ENCODE measurements at regions of chr1 and their contacts with region 1.

Region 1: GRCh38 chr1:180080433-180080832 is 74.2 kb upstream of the QSOX1 start:
- DNase-seq: no peak
- ATAC-seq: no peak
- H3K4me3 ChIP-seq: no peak overlapping the region
- H3K4me3 Mint-ChIP-seq: no peak overlapping the region
- H3K27ac ChIP-seq: no peak overlapping the region
- H3K27ac Mint-ChIP-seq: no peak overlapping the region
- H3K4me1 ChIP-seq: no peaks in the 10 kb centered on the region
- H3K4me1 Mint-ChIP-seq: no peaks in the 10 kb centered on the region
- H3K27me3 ChIP-seq: no peaks in the 10 kb centered on the region
- H3K27me3 Mint-ChIP-seq: no peaks in the 10 kb centered on the region

Region 2: GRCh38 chr1:180065811-180066549 is 14.5 kb before region 1 on chr1:
- CTCF ChIA-PET with region 1: no interaction called
- POLR2A ChIA-PET with region 1: no interaction called
- intact Hi-C with region 1: no loop called
- DNase-seq: no peak
- ATAC-seq: no peak
- H3K4me3 ChIP-seq: no peak overlapping the region
- H3K4me3 Mint-ChIP-seq: no peak overlapping the region
- H3K27ac ChIP-seq: no peak overlapping the region
- H3K27ac Mint-ChIP-seq: no peak overlapping the region
- H3K4me1 ChIP-seq: no peaks in the 10 kb centered on the region
- H3K4me1 Mint-ChIP-seq: no peaks in the 10 kb centered on the region
- H3K27me3 ChIP-seq: no peaks in the 10 kb centered on the region
- H3K27me3 Mint-ChIP-seq: no peaks in the 10 kb centered on the region

Region 3: GRCh38 chr1:180112984-180113647 is 32.7 kb after region 1 on chr1:
- CTCF ChIA-PET with region 1: no interaction called
- POLR2A ChIA-PET with region 1: no interaction called
- intact Hi-C with region 1: no loop called
- DNase-seq: no peak
- ATAC-seq: no peak
- H3K4me3 ChIP-seq: no peak overlapping the region
- H3K4me3 Mint-ChIP-seq: no peak overlapping the region
- H3K27ac ChIP-seq: no peak overlapping the region
- H3K27ac Mint-ChIP-seq: peak overlapping the region in 1 of 9 donors; percentile 12
- H3K4me1 ChIP-seq: no peaks in the 10 kb centered on the region
- H3K4me1 Mint-ChIP-seq: peaks cover 0 to 4% (median 0%) of the 10 kb centered on the region in 7 donors
- H3K27me3 ChIP-seq: no peaks in the 10 kb centered on the region
- H3K27me3 Mint-ChIP-seq: no peaks in the 10 kb centered on the region

Region 4: DNA sequence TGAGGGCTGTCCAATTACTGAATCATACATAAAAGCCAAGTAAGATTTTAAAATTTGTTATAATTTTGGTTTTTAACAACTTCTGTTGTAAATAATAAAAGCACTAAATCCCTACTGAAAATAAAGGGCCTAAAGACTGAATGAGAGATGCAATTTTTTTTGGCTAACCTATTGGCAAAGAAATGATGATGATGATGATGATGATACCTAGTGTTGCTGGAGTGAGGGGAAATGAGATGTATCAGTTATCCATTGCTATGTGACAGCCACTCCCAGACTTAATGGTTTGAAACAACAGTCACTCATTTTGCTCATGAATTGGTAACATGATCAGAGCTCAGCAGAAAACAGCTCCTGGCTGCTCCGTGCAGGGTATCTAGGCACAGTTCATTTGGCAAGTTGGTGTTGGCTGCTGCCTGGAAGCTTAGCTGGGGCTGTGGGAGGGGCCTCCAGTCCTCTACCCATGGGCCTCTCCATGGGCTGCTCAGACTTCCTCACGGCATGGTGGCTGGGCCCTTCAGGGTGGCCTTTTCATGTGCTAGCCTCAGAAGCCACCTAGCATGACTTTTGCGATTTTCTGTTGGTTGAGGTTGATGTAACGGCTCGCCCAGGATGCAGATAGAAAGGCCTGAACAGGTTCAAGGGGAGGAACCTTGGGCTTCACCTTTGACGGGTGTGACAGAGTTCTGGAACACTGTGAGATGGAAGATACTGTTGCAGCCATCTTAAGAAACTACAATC is 123.6 kb after region 1 on chr1:
- CTCF ChIA-PET with region 1: interaction called, 11 read pairs
- POLR2A ChIA-PET with region 1: no interaction called
- intact Hi-C with region 1: no loop called
- DNase-seq: no peak
- ATAC-seq: no peak
- H3K4me3 ChIP-seq: no peak overlapping the region
- H3K4me3 Mint-ChIP-seq: no peak overlapping the region
- H3K27ac ChIP-seq: no peak overlapping the region
- H3K27ac Mint-ChIP-seq: no peak overlapping the region
- H3K4me1 ChIP-seq: no peaks in the 10 kb centered on the region
- H3K4me1 Mint-ChIP-seq: peaks cover 0 to 7% (median 0%) of the 10 kb centered on the region in 7 donors
- H3K27me3 ChIP-seq: no peaks in the 10 kb centered on the region
- H3K27me3 Mint-ChIP-seq: peaks cover 0 to 5% (median 0%) of the 10 kb centered on the region in 5 donors